ENCODE measurements at regions of chr17 and their contacts with region 1.

Region 1: DNA sequence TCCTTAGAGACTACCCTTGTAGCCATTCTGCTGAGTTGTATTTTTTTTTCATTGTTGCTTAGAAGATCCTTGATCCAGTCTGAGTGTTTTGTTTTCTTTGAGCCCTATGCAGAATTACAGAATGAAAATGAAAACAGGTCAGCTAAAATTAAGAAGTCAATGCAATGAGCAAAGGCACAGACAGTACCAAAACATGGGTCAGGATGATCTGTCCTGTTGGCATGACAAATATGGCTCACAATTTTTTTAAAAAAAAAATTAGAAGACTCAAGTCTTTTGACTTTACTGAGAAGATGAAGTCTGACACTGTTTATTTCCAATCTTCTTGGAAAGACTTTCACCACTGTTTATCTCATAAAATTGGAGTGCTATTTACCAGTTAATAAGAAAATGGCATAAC is 32.4 kb downstream of the KCNJ16 start:
- DNase-seq: no peak
- H3K4me3 ChIP-seq: no peak overlapping the region
- H3K27ac ChIP-seq: no peak overlapping the region
- H3K4me1 ChIP-seq: peaks cover 0 to 21% (median 6%) of the 10 kb centered on the region in 4 donors
- H3K27me3 ChIP-seq: no peaks in the 10 kb centered on the region
- CTCF ChIP-seq: no peak

Region 2: DNA sequence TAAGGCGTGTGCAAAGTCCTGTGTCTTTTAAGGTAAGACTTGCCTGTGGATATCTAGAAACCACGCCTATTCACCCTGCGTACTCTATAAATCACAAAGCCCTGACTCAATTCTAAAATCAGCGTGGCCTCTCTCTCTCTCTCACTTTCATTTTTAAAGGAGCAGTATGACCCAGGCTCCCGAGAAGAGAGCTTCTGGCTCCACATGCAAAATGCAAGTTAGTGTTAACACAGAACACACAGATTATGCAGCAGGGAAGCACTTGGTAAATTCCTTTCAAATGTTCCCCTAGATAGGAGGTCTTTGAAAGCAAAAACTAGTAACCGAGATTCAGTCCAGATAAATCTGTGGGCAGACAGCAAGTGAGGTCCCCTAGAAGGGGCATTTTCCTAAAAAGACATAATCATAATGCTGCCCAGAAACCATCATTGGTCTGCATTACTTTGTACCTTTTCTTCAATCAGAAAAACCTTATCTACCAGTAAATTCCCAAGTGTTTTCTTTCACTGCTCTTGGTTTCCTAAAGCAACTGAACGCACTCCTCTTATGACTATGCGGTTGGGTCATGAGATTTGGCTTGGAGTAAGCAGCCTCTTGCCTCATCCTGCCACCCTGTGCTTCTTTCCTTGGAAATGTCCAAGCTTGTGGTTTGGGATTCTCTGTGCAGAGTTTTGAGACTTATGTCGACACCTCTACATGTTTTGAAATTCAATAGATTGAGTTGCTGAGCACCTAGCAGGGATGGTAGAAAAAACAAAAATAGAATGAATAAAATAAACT is 30.2 kb after region 1 on chr17:
- intact Hi-C with region 1: loop called (anchors 2 kb)
- DNase-seq: peak; percentile 82 to 83
- H3K4me3 ChIP-seq: peak overlapping the region; percentile 35 to 51
- H3K27ac ChIP-seq: peak overlapping the region; percentile 52 to 76
- H3K4me1 ChIP-seq: peaks cover 0 to 17% (median 12%) of the 10 kb centered on the region in 4 donors
- H3K27me3 ChIP-seq: no peaks in the 10 kb centered on the region
- CTCF ChIP-seq: no peak

Measured in tibial artery (tissue), 4 donors.